Calu3 (cell line): ENCODE measurements at regions of chr16 and their contacts with region 1.

Region 1: DNA sequence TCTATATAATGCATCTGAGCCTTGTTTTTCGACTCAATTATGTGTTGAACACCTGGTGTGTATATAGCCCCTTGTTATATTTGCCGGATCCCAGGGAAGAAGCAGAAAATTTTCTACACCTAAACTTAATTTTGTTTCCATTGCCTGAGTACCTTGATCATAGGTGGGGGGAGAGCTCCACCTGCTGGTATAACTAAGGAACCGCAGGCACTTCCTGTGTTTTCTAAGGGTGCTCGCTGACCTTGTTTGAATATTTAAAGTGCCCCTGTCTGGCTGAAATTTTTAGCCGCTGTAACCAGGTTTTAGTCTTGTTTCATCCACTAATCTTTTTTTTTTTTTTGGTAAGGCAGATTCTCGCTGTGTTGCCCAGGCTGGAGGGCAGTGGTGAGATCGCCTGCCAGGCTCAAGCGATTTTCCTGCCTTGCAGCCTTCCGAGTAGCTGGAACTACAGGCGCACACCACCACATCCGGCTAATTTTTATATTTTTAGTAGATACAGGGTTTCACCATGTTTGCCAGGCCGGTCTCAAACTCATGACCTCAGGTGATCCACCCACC is 6.5 kb upstream of the NUBP1 start:
- DNase-seq: peak; percentile 79
- H3K4me3 Mint-ChIP-seq: peak overlapping the region; percentile 29
- H3K27ac Mint-ChIP-seq: peak overlapping the region; percentile 19
- H3K4me1 Mint-ChIP-seq: peaks cover 35% of the 10 kb centered on the region
- H3K27me3 Mint-ChIP-seq: no peaks in the 10 kb centered on the region
- CTCF ChIP-seq: peak; percentile 94

Region 2: DNA sequence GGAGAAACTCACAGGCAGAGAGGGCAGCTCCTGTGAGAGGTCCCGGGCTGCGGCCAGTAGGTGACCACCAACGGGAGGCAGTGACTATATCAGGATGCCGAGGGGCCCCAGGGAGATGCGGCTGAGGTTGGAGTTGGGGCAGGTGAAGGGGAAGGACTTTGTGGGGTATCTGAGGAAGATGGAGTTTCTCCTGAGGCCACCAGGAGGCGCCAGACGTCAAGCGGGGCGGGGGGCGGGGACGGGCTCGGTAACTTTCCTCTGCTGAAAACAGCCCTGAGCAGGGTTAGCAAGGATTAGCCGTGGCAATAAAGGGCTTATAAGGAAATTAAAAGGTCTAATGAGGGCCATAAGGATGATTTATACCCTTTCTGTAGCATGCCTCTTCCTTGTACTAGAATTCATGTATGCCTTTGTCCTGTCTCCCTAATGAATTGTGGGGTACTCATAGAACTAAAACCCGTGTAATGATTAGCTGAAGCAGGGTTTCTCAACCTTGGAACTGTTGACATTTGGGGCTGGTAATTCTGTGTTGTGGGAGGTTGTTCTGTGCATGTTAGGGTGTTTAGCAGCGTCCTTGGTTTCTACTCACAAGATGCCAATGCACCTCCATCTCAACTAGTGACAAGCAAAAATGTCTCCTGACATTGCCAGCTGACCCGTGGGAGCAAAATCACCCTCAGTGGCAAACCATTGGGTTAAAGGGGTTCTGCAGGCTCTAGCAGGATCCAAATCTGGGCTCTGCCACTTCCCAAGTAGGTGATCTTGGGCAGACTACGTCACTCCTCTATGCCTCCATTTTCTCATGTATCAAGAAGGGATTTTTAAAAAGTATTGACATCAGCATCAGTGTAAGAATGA is 480.1 kb before region 1 on chr16:
- CTCF ChIA-PET with region 1: no interaction called
- intact Hi-C with region 1: loop called (anchors 5 kb)
- DNase-seq: peak; percentile 52
- H3K4me3 Mint-ChIP-seq: peak overlapping the region; percentile 13
- H3K27ac Mint-ChIP-seq: no peak overlapping the region
- H3K4me1 Mint-ChIP-seq: peaks cover 18% of the 10 kb centered on the region
- H3K27me3 Mint-ChIP-seq: peaks cover 9% of the 10 kb centered on the region
- CTCF ChIP-seq: peak; percentile 82

Region 3: DNA sequence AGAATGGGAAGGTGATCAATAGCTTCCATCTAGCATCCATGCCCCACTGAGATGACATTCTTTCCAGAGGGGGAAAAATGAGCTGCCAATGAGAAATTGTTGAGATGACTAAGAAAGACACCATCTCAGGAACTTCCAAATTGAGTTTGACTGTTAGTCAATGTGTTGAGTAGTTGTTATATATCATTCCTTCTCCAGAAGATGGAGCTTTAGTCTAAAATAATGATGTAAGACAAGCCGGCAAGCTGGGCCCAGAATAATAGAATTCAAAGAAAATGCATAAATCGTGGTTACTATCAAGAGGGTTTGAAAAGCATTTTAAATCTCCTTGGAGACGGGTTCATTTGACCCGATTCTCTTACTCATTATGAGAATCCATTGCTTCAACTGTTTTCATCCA is 422.3 kb before region 1 on chr16:
- CTCF ChIA-PET with region 1: interaction called, 6 read pairs
- intact Hi-C with region 1: loop called (anchors 2 kb)
- DNase-seq: no peak
- H3K4me3 Mint-ChIP-seq: no peak overlapping the region
- H3K27ac Mint-ChIP-seq: no peak overlapping the region
- H3K4me1 Mint-ChIP-seq: peaks cover 23% of the 10 kb centered on the region
- H3K27me3 Mint-ChIP-seq: no peaks in the 10 kb centered on the region
- CTCF ChIP-seq: no peak

Region 4: GRCh38 chr16:10521681-10522274 is 215.4 kb before region 1 on chr16:
- CTCF ChIA-PET with region 1: interaction called, 10 read pairs
- intact Hi-C with region 1: no loop called
- DNase-seq: peak; percentile 78
- H3K4me3 Mint-ChIP-seq: no peak overlapping the region
- H3K27ac Mint-ChIP-seq: no peak overlapping the region
- H3K4me1 Mint-ChIP-seq: peaks cover 12% of the 10 kb centered on the region
- H3K27me3 Mint-ChIP-seq: no peaks in the 10 kb centered on the region
- CTCF ChIP-seq: peak; percentile 80

Region 5: GRCh38 chr16:10558746-10559641 is 178.2 kb before region 1 on chr16:
- CTCF ChIA-PET with region 1: no interaction called
- intact Hi-C with region 1: no loop called
- DNase-seq: peak; percentile 42
- H3K4me3 Mint-ChIP-seq: no peak overlapping the region
- H3K27ac Mint-ChIP-seq: no peak overlapping the region
- H3K4me1 Mint-ChIP-seq: peaks cover 15% of the 10 kb centered on the region
- H3K27me3 Mint-ChIP-seq: no peaks in the 10 kb centered on the region
- CTCF ChIP-seq: no peak

Region 6: DNA sequence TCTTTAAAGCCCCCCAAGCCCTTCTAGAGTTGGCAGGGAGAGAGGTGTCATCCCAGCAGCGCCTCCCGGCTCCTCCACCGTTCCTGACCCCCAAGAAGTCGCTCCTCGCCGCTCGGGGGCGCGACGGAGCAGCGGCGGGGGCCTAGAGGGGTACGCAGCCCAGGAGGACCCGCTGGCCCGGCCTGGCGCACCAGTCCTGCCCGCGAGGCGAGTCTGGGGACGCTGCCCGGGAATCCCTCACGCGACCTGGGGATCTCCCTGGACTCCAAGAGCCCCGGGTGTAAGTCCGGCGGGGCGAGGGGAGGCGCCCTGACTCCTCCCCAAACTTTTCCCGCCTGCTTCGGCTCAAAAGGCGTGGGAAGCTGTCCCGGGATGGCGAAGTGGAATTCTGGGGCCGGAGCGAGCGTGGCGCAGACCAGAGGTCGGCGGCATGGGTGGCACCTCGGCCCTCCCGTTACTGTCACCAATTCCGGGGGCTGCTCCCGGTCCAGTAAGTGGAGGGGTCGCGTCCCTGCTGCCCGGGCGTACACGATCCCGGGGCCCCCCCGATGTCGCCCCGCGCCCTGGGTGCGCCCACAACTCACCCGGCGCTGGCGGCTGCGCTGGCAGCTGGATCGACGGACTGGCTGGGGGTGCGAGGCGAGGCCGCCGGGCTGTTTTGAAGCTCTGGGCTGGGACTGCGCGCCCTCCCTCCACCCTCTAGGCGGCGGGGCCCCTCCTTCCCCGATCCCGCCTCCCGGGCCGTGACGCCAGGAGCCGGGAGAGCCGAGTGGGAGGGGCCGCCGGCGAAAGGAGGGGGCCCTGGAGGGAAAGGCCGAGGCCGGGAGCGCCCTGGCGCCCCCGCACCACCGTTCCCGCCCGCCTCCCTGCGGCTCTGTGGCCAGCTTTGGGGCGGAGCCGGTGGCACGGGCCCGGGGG is 156.9 kb before region 1 on chr16 and contains the start of gene EMP2:
- CTCF ChIA-PET with region 1: interaction called, 5 read pairs
- intact Hi-C with region 1: loop called (anchors 5 kb)
- DNase-seq: peak; percentile 93
- H3K4me3 Mint-ChIP-seq: peak within 1 kb of the TSS; percentile 83
- H3K27ac Mint-ChIP-seq: peak within 1 kb of the TSS; percentile 56
- H3K4me1 Mint-ChIP-seq: peaks cover 41% of the 10 kb centered on the region
- H3K27me3 Mint-ChIP-seq: peaks cover 14% of the 10 kb centered on the region
- CTCF ChIP-seq: peak; percentile 71
- total RNA-seq, gene EMP2: 65.9 and 73.9 TPM in 2 replicates